ENCODE measurements at regions of chr6 and their contacts with region 1.

Region 1: DNA sequence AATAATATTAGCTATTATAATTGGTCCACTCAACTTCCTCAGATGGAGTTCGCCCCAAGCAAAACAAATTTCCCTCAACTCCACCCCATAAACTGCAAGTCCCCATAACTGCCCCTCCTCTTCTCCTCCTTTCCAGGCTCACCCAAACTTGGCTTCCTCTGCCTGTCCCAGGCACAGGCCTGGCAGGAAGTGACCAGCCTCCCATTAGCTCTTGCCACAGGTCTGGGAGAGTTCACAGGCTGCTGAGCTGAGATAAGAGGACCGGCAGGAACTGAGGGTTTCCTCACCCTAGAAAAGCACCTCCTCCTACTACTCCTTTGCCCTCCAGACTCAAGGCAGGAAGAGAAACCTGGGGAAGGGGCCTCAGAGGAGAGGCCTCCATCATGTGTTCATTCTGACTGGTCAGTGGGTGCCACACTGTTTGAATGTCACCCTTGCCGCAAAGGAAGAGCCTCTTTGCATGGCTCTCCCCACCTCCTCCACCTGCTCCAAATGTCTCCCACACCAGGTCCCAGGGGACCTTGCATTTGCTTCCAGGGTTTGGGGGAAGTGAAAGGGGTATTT is 24.5 kb upstream of the SMIM29 start:
- DNase-seq: no peak
- ATAC-seq: no peak
- H3K4me3 ChIP-seq: no peak overlapping the region
- H3K27ac ChIP-seq: peak overlapping the region; percentile 7 to 55 (median 37)
- H3K4me1 ChIP-seq: peaks cover 32 to 36% of the 10 kb centered on the region in 2 donors
- H3K27me3 ChIP-seq: no peaks in the 10 kb centered on the region
- CTCF ChIP-seq: no peak
- POLR2A ChIP-seq: no peak

Region 2: GRCh38 chr6:33751771-33752645 is 521.3 kb before region 1 on chr6:
- in situ Hi-C with region 1: loop called in 1 of 4 experiments (anchors 25 kb)
- intact Hi-C with region 1: loop called (anchors 1 kb)
- DNase-seq: peak in 1 of 2 donors; percentile 53
- ATAC-seq: no peak
- H3K4me3 ChIP-seq: no peak overlapping the region
- H3K27ac ChIP-seq: peak overlapping the region; percentile 98 to 100 (median 100)
- H3K4me1 ChIP-seq: peaks cover 26 to 34% of the 10 kb centered on the region in 2 donors
- H3K27me3 ChIP-seq: no peaks in the 10 kb centered on the region
- CTCF ChIP-seq: no peak
- POLR2A ChIP-seq: no peak

Region 3: GRCh38 chr6:34362909-34363680 is 89.8 kb after region 1 on chr6:
- in situ Hi-C with region 1: no loop called
- intact Hi-C with region 1: loop called (anchors 2 kb)
- DNase-seq: peak; percentile 19 to 44
- ATAC-seq: peak; percentile 95 to 98
- H3K4me3 ChIP-seq: peak overlapping the region in 3 of 4 donors; percentile 13 to 38 (median 27)
- H3K27ac ChIP-seq: peak overlapping the region; percentile 85 to 94 (median 89)
- H3K4me1 ChIP-seq: peaks cover 56 to 61% of the 10 kb centered on the region in 2 donors
- H3K27me3 ChIP-seq: no peaks in the 10 kb centered on the region
- CTCF ChIP-seq: no peak
- POLR2A ChIP-seq: no peak

Region 4: GRCh38 chr6:34392497-34393190 is 119.3 kb after region 1 on chr6 and contains the start of gene NUDT3:
- in situ Hi-C with region 1: no loop called
- intact Hi-C with region 1: loop called (anchors 1 kb)
- DNase-seq: peak; percentile 91 to 94
- ATAC-seq: peak; percentile 73 to 75
- H3K4me3 ChIP-seq: peak within 1 kb of the TSS; percentile 76 to 99 (median 87)
- H3K27ac ChIP-seq: peak within 1 kb of the TSS; percentile 98 to 100 (median 98)
- H3K4me1 ChIP-seq: peaks cover 41 to 48% of the 10 kb centered on the region in 2 donors
- H3K27me3 ChIP-seq: no peaks in the 10 kb centered on the region
- CTCF ChIP-seq: peak; percentile 87 to 94 (median 91)
- POLR2A ChIP-seq: peak; percentile 91 to 93
- total RNA-seq, gene NUDT3: 40.0 to 71.9 (median 50.6) TPM

Measured in gastrocnemius medialis (tissue), 4 donors.